Activated CD4-positive, alpha-beta memory T cell treated with anti-CD3 and anti-CD28 coated beads for 36 hours (primary cell): ENCODE measurements at regions of chr1 and their contacts with region 1.

Region 1: GRCh38 chr1:89065079-89065868 is at the start of gene GBP1:
- DNase-seq: no peak
- H3K4me3 Mint-ChIP-seq: peak within 1 kb of the TSS; percentile 87
- H3K27ac Mint-ChIP-seq: peak within 1 kb of the TSS; percentile 91
- H3K4me1 Mint-ChIP-seq: peaks cover 56% of the 10 kb centered on the region
- H3K27me3 Mint-ChIP-seq: no peaks in the 10 kb centered on the region
- total RNA-seq, gene GBP1: 66.9 to 67.9 TPM

Region 2: DNA sequence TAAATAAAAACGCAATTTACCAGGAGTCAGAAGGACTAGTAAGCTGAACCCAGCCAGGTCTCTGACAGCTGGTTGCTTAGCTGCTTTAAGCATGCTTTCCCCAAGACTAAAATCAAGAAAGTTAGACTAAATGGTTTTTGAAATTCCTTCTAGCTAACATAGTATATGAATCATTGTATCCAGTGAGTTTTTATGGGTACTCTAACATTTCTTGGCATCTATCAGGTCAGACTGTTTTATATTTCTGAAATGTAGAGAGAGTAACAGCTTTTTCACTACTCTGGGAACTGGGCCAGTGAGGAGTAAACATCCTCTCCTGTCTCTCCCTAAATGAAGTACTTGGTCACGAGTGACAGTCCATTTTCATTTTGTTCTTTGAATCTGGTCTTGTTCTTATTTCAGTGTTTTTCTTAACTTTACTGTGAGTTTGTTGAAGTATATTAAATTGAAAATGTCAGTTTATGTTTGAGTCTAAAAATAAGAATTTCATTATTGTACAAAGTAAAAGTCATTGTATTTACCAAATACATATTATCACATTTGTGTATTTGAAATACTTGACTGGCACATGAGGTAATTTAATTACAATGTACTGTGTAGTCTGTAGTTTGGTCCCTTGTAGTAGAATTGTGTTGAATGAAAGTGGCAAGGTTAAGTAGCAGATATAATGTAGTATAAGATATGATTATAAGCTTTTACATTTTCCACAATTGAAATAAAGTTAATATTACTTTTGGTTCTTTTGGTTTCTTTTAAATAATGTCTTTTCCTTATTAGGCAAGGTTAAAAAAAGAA is 333.6 kb before region 1 on chr1:
- CTCF ChIA-PET with region 1: no interaction called
- POLR2A ChIA-PET with region 1: no interaction called
- intact Hi-C with region 1: no loop called
- DNase-seq: no peak
- H3K4me3 Mint-ChIP-seq: no peak overlapping the region
- H3K27ac Mint-ChIP-seq: no peak overlapping the region
- H3K4me1 Mint-ChIP-seq: peaks cover 20% of the 10 kb centered on the region
- H3K27me3 Mint-ChIP-seq: no peaks in the 10 kb centered on the region

Region 3: GRCh38 chr1:89022167-89022959 is 42.9 kb before region 1 on chr1 and contains the start of gene GBP3:
- CTCF ChIA-PET with region 1: interaction called, 3 read pairs
- POLR2A ChIA-PET with region 1: interaction called, 3 read pairs
- intact Hi-C with region 1: loop called (anchors 1 kb)
- DNase-seq: no peak
- H3K4me3 Mint-ChIP-seq: peak within 1 kb of the TSS; percentile 76
- H3K27ac Mint-ChIP-seq: peak within 1 kb of the TSS; percentile 69
- H3K4me1 Mint-ChIP-seq: peaks cover 52% of the 10 kb centered on the region
- H3K27me3 Mint-ChIP-seq: peaks cover 2% of the 10 kb centered on the region
- total RNA-seq, gene GBP3: 4.5 to 5.7 TPM

Region 4: GRCh38 chr1:89085781-89086180 is 20.5 kb after region 1 on chr1:
- CTCF ChIA-PET with region 1: interaction called, 10 read pairs
- POLR2A ChIA-PET with region 1: no interaction called
- intact Hi-C with region 1: no loop called
- DNase-seq: peak; percentile 43
- H3K4me3 Mint-ChIP-seq: no peak overlapping the region
- H3K27ac Mint-ChIP-seq: no peak overlapping the region
- H3K4me1 Mint-ChIP-seq: peaks cover 6% of the 10 kb centered on the region
- H3K27me3 Mint-ChIP-seq: no peaks in the 10 kb centered on the region

Region 5: GRCh38 chr1:89104147-89104546 is 38.9 kb after region 1 on chr1:
- CTCF ChIA-PET with region 1: no interaction called
- POLR2A ChIA-PET with region 1: no interaction called
- intact Hi-C with region 1: loop called (anchors 5 kb)
- DNase-seq: no peak
- H3K4me3 Mint-ChIP-seq: no peak overlapping the region
- H3K27ac Mint-ChIP-seq: peak overlapping the region; percentile 69
- H3K4me1 Mint-ChIP-seq: peaks cover 52% of the 10 kb centered on the region
- H3K27me3 Mint-ChIP-seq: no peaks in the 10 kb centered on the region

Region 6: DNA sequence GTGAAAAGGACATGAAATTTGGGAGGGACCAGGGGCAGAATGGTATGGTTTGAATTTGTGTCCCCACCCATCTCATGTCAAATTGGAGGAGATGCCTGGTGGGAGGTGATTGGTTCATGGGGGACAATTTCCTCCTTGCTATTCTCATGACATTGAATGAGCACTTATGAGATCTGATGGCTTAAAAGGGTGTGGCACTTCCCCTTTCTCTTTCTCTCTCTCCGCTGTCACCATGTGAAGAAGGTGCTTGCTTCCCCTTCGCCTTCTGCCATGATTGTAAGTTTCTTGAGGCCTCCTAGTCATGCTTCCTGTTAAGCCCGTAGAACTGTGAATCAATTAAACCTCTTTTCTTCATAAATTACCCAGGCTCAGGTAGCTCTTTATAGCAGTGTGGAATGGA is 141.1 kb after region 1 on chr1:
- CTCF ChIA-PET with region 1: no interaction called
- POLR2A ChIA-PET with region 1: no interaction called
- intact Hi-C with region 1: no loop called
- DNase-seq: no peak
- H3K4me3 Mint-ChIP-seq: no peak overlapping the region
- H3K27ac Mint-ChIP-seq: no peak overlapping the region
- H3K4me1 Mint-ChIP-seq: peaks cover 19% of the 10 kb centered on the region
- H3K27me3 Mint-ChIP-seq: no peaks in the 10 kb centered on the region